CD4-positive, alpha-beta T cell (primary cell): ENCODE measurements at regions of chr18 and their contacts with region 1.

Region 1: GRCh38 chr18:25495606-25496005 is 143.6 kb upstream of the ZNF521 start:
- DNase-seq: no peak
- ATAC-seq: no peak
- H3K4me3 ChIP-seq: no peak overlapping the region
- H3K4me3 Mint-ChIP-seq: no peak overlapping the region
- H3K27ac ChIP-seq: no peak overlapping the region
- H3K27ac Mint-ChIP-seq: no peak overlapping the region
- H3K4me1 ChIP-seq: no peaks in the 10 kb centered on the region
- H3K4me1 Mint-ChIP-seq: no peaks in the 10 kb centered on the region
- H3K27me3 ChIP-seq: no peaks in the 10 kb centered on the region
- H3K27me3 Mint-ChIP-seq: peaks cover 9% of the 10 kb centered on the region
- CTCF ChIP-seq: no peak

Region 2: DNA sequence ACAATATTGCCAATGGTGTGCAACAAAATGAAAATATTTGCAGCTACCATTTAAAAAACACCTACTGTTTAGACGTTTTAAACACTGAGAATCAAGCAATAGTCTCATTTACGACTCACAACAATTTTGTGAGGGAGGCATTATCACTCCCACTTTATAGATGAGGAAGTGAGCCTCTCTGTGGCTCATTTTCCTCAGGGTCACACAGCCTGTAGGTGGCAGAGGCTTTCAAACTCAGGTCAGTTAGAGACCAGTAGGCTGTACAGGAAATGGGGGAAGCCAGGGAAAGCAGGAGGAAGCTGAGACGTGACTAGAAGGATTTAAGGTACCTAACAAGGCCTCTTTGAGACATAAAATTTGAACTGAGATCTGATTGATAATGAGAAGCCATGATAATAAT is 48.6 kb before region 1 on chr18:
- CTCF ChIA-PET with region 1: no interaction called
- POLR2A ChIA-PET with region 1: no interaction called
- intact Hi-C with region 1: loop called in 1 of 2 experiments (anchors 5 kb)
- DNase-seq: no peak
- ATAC-seq: no peak
- H3K4me3 ChIP-seq: no peak overlapping the region
- H3K4me3 Mint-ChIP-seq: no peak overlapping the region
- H3K27ac ChIP-seq: no peak overlapping the region
- H3K27ac Mint-ChIP-seq: no peak overlapping the region
- H3K4me1 ChIP-seq: no peaks in the 10 kb centered on the region
- H3K4me1 Mint-ChIP-seq: no peaks in the 10 kb centered on the region
- H3K27me3 ChIP-seq: no peaks in the 10 kb centered on the region
- H3K27me3 Mint-ChIP-seq: no peaks in the 10 kb centered on the region
- CTCF ChIP-seq: no peak

Region 3: GRCh38 chr18:25814841-25815458 is 319.3 kb after region 1 on chr18:
- CTCF ChIA-PET with region 1: no interaction called
- POLR2A ChIA-PET with region 1: no interaction called
- intact Hi-C with region 1: no loop called
- DNase-seq: peak in 2 of 14 experiments; percentile 1 to 15
- ATAC-seq: no peak
- H3K4me3 ChIP-seq: no peak overlapping the region
- H3K4me3 Mint-ChIP-seq: no peak overlapping the region
- H3K27ac ChIP-seq: no peak overlapping the region
- H3K27ac Mint-ChIP-seq: no peak overlapping the region
- H3K4me1 ChIP-seq: no peaks in the 10 kb centered on the region
- H3K4me1 Mint-ChIP-seq: peaks cover 10% of the 10 kb centered on the region
- H3K27me3 ChIP-seq: peaks cover 1 to 2% of the 10 kb centered on the region in 2 experiments
- H3K27me3 Mint-ChIP-seq: no peaks in the 10 kb centered on the region
- CTCF ChIP-seq: no peak